Naive thymus-derived CD8-positive, alpha-beta T cell (primary cell): ENCODE measurements at regions of chr9 and their contacts with region 1.

Region 1: DNA sequence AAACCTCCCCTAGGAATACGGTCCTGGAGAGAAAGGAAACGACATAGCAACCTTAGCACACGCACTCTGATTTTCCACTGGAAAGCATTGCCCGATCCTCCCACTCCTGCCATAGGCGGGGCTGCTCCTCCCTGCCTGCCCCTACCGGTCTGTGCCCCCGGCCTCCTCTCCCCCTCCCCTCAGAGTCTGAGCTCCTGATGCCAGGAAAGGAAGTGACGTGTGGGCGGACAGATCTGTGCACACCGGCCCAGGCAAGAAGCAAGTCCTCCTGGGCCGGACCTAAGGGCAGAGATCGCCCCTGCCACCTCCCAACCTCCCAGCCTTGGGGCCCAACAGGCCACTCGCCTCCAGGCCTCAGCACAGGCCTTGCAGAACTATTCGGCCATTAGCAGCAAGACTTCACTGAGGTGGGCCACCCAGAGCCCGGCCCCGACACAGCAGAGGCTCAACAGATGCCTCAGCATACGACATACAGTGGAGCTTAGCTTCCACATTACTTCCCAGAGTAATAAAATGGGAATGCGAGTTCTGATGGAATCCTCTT is 7.2 kb downstream of the NINJ1 start:
- DNase-seq: peak in 2 of 10 donors; percentile 15 to 63
- ATAC-seq: peak; percentile 19 to 31
- H3K4me3 Mint-ChIP-seq: peak overlapping the region; percentile 22 to 90 (median 70)
- H3K27ac Mint-ChIP-seq: peak overlapping the region; percentile 87 to 99 (median 96)
- H3K4me1 Mint-ChIP-seq: peaks cover 32 to 79% (median 65%) of the 10 kb centered on the region in 4 donors
- H3K27me3 Mint-ChIP-seq: no peaks in the 10 kb centered on the region

Region 2: GRCh38 chr9:93143830-93144530 is 17.1 kb after region 1 on chr9:
- POLR2A ChIA-PET with region 1: interaction called, 53 read pairs
- DNase-seq: peak; percentile 48 to 86 (median 75)
- ATAC-seq: peak; percentile 97 to 98
- H3K4me3 Mint-ChIP-seq: peak overlapping the region; percentile 44 to 81 (median 72)
- H3K27ac Mint-ChIP-seq: peak overlapping the region; percentile 95 to 99 (median 97)
- H3K4me1 Mint-ChIP-seq: peaks cover 18 to 69% (median 55%) of the 10 kb centered on the region in 4 donors
- H3K27me3 Mint-ChIP-seq: no peaks in the 10 kb centered on the region

Region 3: GRCh38 chr9:93161786-93162562 is 35.1 kb after region 1 on chr9:
- POLR2A ChIA-PET with region 1: no interaction called
- DNase-seq: no peak
- ATAC-seq: no peak
- H3K4me3 Mint-ChIP-seq: no peak overlapping the region
- H3K27ac Mint-ChIP-seq: peak overlapping the region in 2 of 10 donors; percentile 33 to 61
- H3K4me1 Mint-ChIP-seq: peaks cover 5 to 9% (median 5%) of the 10 kb centered on the region in 4 donors
- H3K27me3 Mint-ChIP-seq: no peaks in the 10 kb centered on the region